Body of pancreas (tissue), 4 donors: ENCODE measurements at regions of chr3 and their contacts with region 1.

Region 1: DNA sequence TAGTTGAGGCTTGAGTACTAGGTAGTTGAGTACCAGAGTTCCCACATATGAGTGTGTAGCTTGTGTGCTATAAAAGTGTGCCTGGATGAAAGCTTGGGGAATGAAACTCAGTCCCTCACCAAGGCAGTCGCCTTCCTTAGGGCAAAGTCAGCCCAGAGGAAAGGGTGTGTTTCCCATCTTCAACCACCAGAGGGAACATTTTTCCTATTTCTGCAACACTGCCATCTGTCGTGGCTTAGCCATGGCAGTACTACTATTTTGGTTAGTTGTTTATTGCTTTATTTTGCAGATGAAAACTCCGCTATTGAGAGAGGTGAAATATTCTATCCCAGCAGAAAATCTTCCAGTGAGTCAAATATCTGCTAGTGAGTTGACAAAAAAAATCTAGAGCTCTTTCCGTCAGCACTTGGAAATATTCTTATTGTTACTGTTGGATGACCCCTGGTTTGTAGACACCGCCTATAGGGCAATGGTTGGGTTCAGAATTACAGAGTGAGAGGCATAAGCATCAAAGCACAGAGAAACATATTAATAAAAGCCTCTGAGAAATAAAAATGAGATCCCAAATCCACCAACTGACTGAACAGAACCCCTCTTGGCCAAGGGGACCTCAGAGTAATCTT is 239.9 kb downstream of the CPNE4 start:
- DNase-seq: peak; percentile 25 to 43 (median 34)
- ATAC-seq: peak; percentile 80
- H3K4me3 ChIP-seq: no peak overlapping the region
- H3K27ac ChIP-seq: no peak overlapping the region
- H3K4me1 ChIP-seq: no peaks in the 10 kb centered on the region
- H3K27me3 ChIP-seq: no peaks in the 10 kb centered on the region
- CTCF ChIP-seq: peak; percentile 66 to 86 (median 77)
- POLR2A ChIP-seq: no peak

Region 2: GRCh38 chr3:131591394-131592014 is 203.4 kb before region 1 on chr3:
- intact Hi-C with region 1: no loop called
- DNase-seq: no peak
- ATAC-seq: no peak
- H3K4me3 ChIP-seq: no peak overlapping the region
- H3K27ac ChIP-seq: no peak overlapping the region
- H3K4me1 ChIP-seq: no peaks in the 10 kb centered on the region
- H3K27me3 ChIP-seq: no peaks in the 10 kb centered on the region
- CTCF ChIP-seq: no peak
- POLR2A ChIP-seq: no peak

Region 3: GRCh38 chr3:132034486-132035464 is 239.9 kb after region 1 on chr3 and contains the start of gene CPNE4:
- intact Hi-C with region 1: loop called (anchors 10 kb)
- DNase-seq: peak; percentile 69 to 87 (median 84)
- ATAC-seq: peak; percentile 95
- H3K4me3 ChIP-seq: no peak within 1 kb of the TSS
- H3K27ac ChIP-seq: no peak within 1 kb of the TSS
- H3K4me1 ChIP-seq: peaks cover 11% of the 10 kb centered on the region
- H3K27me3 ChIP-seq: peaks cover 0 to 8% of the 10 kb centered on the region in 2 donors
- CTCF ChIP-seq: peak; percentile 60 to 83 (median 74)
- POLR2A ChIP-seq: no peak
- total RNA-seq, gene CPNE4: not detected

Region 4: GRCh38 chr3:132898141-132898540 is 1103.3 kb after region 1 on chr3:
- intact Hi-C with region 1: no loop called
- DNase-seq: no peak
- ATAC-seq: no peak
- H3K4me3 ChIP-seq: no peak overlapping the region
- H3K27ac ChIP-seq: no peak overlapping the region
- H3K4me1 ChIP-seq: no peaks in the 10 kb centered on the region
- H3K27me3 ChIP-seq: no peaks in the 10 kb centered on the region
- CTCF ChIP-seq: no peak
- POLR2A ChIP-seq: no peak